ENCODE measurements at regions of chr22 and their contacts with region 1.

Region 1: DNA sequence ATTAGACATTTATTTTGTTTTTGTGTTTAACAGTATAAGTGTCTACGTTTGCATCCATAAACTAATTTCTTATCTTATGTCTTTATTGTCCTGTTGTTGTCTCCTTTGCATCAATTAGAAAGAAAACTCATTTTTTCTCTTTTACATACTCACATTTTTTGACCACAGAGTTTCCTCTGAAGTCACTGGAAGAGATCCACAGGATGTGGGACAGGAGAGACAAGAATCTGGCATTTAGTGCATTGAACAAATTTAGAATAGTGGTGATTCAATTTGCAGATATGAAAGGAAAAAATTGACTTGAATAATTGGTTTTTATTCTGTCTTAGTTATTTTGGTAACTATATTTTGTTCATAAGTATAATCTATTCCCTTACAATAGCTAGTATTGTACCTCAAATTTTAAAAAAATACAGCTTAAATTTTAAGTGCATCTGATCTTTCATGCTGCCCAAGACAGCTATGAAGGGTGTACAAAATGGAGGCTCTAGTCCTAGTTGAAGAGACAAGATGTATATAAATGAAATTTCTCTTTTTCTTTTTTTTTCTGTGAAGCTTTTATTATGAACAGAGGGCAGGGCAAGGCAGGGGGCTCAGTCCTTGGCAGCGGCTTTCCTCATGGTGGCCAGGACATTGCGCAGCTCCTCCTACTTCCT is 24.4 kb downstream of the HORMAD2 start:
- DNase-seq: no peak
- H3K4me3 ChIP-seq: no peak overlapping the region
- H3K27me3 ChIP-seq: no peaks in the 10 kb centered on the region
- CTCF ChIP-seq: no peak

Region 2: DNA sequence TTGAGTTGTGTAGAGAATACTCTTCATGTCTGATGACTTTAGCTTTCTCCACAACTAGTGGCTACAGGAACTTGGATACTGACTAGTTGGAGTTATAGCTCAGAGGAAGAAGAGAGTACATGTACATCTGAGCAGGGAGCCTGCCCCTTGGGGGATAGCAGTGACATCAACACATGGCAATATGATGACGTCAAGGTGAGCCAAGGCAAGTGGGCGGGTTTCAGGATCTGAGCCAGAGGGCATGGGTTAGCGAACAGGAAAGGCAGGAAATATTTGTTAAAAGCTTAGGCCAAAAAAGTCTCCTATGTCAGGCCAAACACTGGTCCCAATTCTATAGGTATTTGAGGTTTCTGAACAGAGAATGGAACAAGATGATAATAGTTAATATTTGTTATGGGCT is 66.4 kb before region 1 on chr22:
- CTCF ChIA-PET with region 1: no interaction called
- POLR2A ChIA-PET with region 1: no interaction called
- DNase-seq: no peak
- H3K4me3 ChIP-seq: no peak overlapping the region
- H3K27me3 ChIP-seq: no peaks in the 10 kb centered on the region
- CTCF ChIP-seq: no peak

Region 3: GRCh38 chr22:30121960-30122359 is 17.3 kb after region 1 on chr22:
- CTCF ChIA-PET with region 1: interaction called, 14 read pairs
- POLR2A ChIA-PET with region 1: no interaction called
- DNase-seq: no peak
- H3K4me3 ChIP-seq: no peak overlapping the region
- H3K27me3 ChIP-seq: no peaks in the 10 kb centered on the region; the same call in 1 of the 2 replicates
- CTCF ChIP-seq: no peak

Measured in BJ (cell line).